Activated B cell treated with CpG ODN at 0.5 μM for 24 hours (primary cell): ENCODE measurements at regions of chr6 and their contacts with region 1.

Region 1: GRCh38 chr6:32604434-32604877 is 14.8 kb upstream of the HLA-DRB1 start:
- DNase-seq: no peak
- ATAC-seq: peak; percentile 68
- H3K4me3 Mint-ChIP-seq: peak overlapping the region; percentile 74
- H3K27ac Mint-ChIP-seq: peak overlapping the region; percentile 93
- H3K4me1 Mint-ChIP-seq: peaks cover 76% of the 10 kb centered on the region
- H3K27me3 Mint-ChIP-seq: no peaks in the 10 kb centered on the region
- CTCF ChIP-seq: no peak

Region 2: DNA sequence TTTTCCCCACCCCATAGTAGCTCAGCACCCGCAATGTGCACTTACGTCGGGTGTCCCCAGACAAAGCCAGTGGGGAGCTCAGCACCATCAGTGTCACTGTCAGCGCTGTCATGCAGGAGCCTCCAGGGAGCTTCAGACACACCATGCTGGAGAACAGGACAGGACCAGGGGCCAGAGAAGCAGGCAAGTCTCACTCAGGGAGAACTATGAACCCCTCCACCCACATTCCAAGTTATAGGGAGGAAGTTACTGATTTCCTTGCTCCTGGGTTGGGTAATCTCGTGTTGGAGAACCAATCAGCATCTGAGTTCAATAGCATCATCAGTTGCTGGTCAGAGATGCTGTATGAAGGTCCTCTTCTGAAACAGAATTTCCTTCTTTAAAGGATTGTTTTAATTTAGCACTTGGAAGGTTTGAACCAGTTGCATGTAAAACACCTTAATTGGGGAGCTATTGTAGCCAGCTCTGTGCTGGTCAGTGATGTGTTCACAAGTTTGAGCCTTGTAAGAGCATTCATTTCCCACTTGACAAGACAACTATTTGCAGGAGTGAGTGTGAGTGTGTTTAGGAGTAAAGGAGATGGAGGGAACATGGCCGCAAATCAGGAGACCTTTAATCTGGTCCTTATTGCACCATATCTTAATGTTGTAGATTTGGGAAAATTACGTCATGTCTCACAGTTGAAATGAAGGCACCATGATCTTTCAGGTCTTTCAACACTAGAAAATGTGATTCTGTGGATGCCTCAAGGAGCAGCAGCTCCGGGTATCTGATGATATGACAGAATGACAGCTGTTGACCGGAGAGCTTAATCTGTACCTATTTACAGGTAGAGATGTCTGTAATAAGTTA is 14.6 kb before region 1 on chr6 and contains the start of gene HLA-DRB1:
- CTCF ChIA-PET with region 1: no interaction called
- POLR2A ChIA-PET with region 1: interaction called, 18 read pairs
- intact Hi-C with region 1: loop called (anchors 2 kb)
- DNase-seq: no peak
- ATAC-seq: peak; percentile 93
- H3K4me3 Mint-ChIP-seq: peak within 1 kb of the TSS; percentile 91
- H3K27ac Mint-ChIP-seq: peak within 1 kb of the TSS; percentile 98
- H3K4me1 Mint-ChIP-seq: peaks cover 66% of the 10 kb centered on the region
- H3K27me3 Mint-ChIP-seq: no peaks in the 10 kb centered on the region
- CTCF ChIP-seq: no peak
- total RNA-seq, gene HLA-DRB1: 621 and 630 TPM in 2 replicates

Region 3: DNA sequence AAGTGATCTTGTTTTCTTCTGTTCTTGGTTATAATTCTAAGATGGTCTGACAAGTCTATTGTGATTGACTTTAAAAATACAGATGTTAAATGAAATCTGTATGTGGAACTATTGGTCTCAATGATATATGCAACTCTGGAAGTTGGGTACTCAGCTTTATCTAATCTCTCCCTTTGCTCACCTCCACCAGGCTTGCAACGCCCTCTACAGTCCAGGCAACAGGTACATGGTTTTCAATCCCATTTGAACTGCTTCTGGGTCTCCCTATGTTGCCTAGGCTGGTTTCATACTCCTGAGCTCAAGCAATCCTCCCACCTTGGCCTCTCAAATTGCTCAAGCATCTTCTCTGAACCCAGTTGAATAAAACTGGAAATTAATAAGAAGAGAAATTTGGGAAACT is 87.6 kb after region 1 on chr6:
- CTCF ChIA-PET with region 1: interaction called, 3 read pairs
- POLR2A ChIA-PET with region 1: interaction called, 16 read pairs
- intact Hi-C with region 1: no loop called
- DNase-seq: no peak
- ATAC-seq: peak; percentile 49
- H3K4me3 Mint-ChIP-seq: peak overlapping the region; percentile 3
- H3K27ac Mint-ChIP-seq: peak overlapping the region; percentile 85
- H3K4me1 Mint-ChIP-seq: peaks cover 54% of the 10 kb centered on the region
- H3K27me3 Mint-ChIP-seq: no peaks in the 10 kb centered on the region
- CTCF ChIP-seq: no peak